ENCODE measurements at regions of chr6 and their contacts with region 1.

Region 1: DNA sequence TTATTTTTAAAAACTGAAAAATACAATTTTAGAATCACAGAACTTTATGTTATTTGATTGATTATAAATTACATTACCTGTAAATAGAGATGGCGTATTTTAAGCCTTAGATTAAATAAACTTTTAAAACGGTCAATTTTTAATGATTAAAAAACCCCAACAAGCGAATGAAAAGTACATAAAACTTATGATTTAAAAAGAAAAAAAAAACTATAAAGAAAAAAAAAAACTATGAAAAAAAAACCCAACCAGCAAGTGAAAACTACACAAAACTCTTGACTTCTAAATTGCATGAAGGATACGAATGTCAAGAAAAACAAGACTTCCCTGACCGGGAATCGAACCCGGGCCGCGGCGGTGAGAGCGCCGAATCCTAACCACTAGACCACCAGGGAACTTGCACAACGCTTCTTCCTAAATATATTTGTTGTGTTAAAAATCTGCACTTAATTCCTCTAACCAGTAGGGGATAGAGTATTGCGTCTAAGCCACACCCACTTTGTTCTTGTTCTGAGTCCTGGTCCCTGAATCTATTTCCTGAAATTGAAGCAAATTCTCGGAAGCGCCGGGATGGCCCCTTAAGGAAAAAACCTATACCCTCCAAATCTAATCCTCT is 10.7 kb upstream of the NCOA7 start:
- DNase-seq: peak; percentile 92

Region 2: DNA sequence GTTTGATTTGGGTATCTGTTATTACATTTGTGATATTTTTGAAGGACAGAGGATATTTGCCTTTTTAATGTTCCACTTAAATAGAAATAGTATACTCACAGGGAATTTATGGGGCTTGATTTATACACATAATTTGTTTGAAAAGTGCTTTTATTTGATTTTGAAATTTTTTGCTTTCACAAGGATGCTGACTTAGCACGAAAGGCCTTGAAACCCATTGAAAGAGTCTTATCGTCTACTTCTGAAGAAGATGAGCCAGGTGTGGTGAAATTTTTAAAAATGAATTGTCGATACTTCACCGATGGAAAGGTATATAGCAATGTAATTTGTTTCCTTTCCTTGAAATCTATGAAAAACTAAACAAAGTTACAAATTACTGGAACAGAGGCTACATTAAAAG is 102.2 kb after region 1 on chr6:
- CTCF ChIA-PET with region 1: no interaction called
- POLR2A ChIA-PET with region 1: no interaction called
- DNase-seq: no peak

Region 3: GRCh38 chr6:125944434-125944816 is 164.4 kb after region 1 on chr6:
- CTCF ChIA-PET with region 1: no interaction called
- POLR2A ChIA-PET with region 1: interaction called, 15 read pairs
- DNase-seq: no peak

Region 4: GRCh38 chr6:125986300-125987025 is 206.4 kb after region 1 on chr6 and contains the start of gene TRMT11:
- CTCF ChIA-PET with region 1: interaction called, 4 read pairs
- POLR2A ChIA-PET with region 1: interaction called, 27 read pairs
- DNase-seq: peak; percentile 98

Measured in HEK293T (cell line).